ENCODE measurements at regions of chr9 and their contacts with region 1.

Region 1: DNA sequence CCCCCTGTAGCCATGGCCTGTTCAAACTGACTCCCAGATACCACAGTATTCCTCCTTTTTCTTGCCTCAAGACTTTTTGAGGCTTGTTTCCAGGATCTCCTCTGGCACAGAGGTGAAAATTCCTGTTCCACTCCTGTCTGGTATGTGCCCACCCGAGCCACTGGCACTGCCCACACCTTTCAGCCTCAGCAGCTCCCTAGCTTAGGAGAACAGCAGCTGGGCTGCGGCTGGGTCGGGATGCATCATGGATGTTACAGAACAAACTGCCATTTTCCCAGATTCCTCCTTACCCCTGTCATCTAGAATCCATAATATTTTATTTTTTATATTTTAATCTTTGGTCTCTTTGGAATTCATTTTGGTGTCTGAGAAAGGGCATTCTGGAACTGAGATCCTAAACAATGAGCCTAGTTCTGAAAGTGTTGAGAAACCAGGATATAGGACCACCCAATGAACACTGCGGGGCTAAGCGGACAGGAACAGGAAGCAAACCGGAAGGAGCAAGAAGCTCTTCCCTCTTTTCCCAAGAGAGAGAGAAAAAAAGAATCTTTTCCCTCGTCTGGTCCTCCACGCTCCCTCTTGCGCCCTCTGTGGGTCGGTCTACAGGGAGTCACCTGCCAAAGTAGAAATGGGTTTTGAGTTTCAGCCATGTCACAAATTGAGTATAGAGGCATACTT is 12.5 kb downstream of the OR2S2 start:
- DNase-seq: no peak
- ATAC-seq: peak; percentile 84
- H3K4me3 ChIP-seq: no peak overlapping the region
- H3K27ac ChIP-seq: no peak overlapping the region
- H3K4me1 ChIP-seq: no peaks in the 10 kb centered on the region
- H3K27me3 ChIP-seq: no peaks in the 10 kb centered on the region
- CTCF ChIP-seq: peak; percentile 71 to 86 (median 79)
- EP300 ChIP-seq: no peak
- POLR2A ChIP-seq: no peak
- RAD21 ChIP-seq: peak; percentile 63

Region 2: GRCh38 chr9:35920051-35920620 is 25.3 kb before region 1 on chr9:
- CTCF ChIA-PET with region 1: interaction called, 12 read pairs
- POLR2A ChIA-PET with region 1: interaction called, 4 read pairs
- RAD21 ChIA-PET with region 1: no interaction called
- SMC1A ChIA-PET with region 1: no interaction called
- in situ Hi-C with region 1: no loop called
- intact Hi-C with region 1: no loop called
- DNase-seq: no peak
- ATAC-seq: no peak
- H3K4me3 ChIP-seq: no peak overlapping the region
- H3K27ac ChIP-seq: no peak overlapping the region
- H3K4me1 ChIP-seq: no peaks in the 10 kb centered on the region
- H3K27me3 ChIP-seq: no peaks in the 10 kb centered on the region; a peak in 2 of 4 replicates
- CTCF ChIP-seq: no peak
- EP300 ChIP-seq: no peak
- POLR2A ChIP-seq: no peak
- RAD21 ChIP-seq: no peak

Region 3: DNA sequence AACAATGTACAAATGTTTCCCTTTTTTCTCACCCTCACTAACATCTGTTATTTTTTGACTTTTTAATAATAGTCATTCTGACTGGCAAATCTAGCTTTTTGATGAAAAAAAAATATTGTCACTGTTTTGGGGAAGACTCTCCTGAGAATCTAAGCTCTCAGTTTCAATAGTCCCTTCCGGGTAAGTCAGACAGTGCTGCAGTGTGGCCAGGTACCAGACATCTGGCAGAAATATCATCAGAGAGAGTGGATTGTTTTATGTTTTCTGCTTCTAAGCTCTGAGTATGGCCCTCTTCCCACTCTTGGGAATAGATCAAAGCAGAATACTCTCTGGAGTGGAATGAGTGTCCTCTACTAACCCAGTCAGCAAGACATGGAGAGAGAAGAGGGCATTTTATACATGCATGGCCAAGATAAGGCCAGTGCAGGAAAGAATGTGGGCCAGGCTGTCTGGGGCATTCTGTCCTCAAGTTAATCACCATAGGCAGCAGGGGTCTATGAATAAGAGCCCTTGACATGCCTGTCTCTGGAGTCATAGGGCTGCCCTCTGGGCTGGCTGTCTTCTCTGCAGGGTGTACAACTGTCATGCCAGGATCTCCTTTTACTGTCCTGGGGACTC is 51.0 kb after region 1 on chr9:
- CTCF ChIA-PET with region 1: no interaction called
- POLR2A ChIA-PET with region 1: no interaction called
- RAD21 ChIA-PET with region 1: no interaction called
- SMC1A ChIA-PET with region 1: no interaction called
- in situ Hi-C with region 1: no loop called
- intact Hi-C with region 1: no loop called
- DNase-seq: no peak
- ATAC-seq: no peak
- H3K4me3 ChIP-seq: no peak overlapping the region
- H3K27ac ChIP-seq: no peak overlapping the region
- H3K4me1 ChIP-seq: no peaks in the 10 kb centered on the region
- H3K27me3 ChIP-seq: no peaks in the 10 kb centered on the region
- CTCF ChIP-seq: no peak
- EP300 ChIP-seq: no peak
- POLR2A ChIP-seq: no peak
- RAD21 ChIP-seq: no peak

Measured in GM12878 (cell line).